Aorta (tissue), 5 donors: ENCODE measurements at regions of chr3 and their contacts with region 1.

Region 1: DNA sequence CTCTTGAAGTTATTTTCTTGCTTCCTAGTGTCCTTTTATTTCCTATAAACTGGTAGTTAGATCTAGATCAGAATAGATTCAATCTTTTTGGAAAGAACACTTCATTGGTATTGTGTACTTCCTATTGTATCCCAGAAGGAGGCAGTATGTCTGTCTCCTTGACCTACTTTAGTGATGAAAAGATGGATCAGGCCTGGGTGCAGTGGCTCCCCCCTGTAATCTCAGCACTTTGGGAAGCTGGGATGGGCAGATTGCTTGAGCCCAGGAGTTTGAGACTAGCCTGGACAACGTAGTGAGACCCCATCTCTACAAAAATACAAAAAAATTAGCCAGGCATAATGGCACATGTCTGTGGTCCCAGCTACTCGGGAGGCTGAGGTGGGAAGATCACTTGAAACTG is 12.0 kb downstream of the BSN start:
- DNase-seq: no peak
- ATAC-seq: no peak
- H3K4me3 ChIP-seq: no peak overlapping the region
- H3K27ac ChIP-seq: no peak overlapping the region
- H3K4me1 ChIP-seq: no peaks in the 10 kb centered on the region
- H3K27me3 ChIP-seq: no peaks in the 10 kb centered on the region

Region 2: DNA sequence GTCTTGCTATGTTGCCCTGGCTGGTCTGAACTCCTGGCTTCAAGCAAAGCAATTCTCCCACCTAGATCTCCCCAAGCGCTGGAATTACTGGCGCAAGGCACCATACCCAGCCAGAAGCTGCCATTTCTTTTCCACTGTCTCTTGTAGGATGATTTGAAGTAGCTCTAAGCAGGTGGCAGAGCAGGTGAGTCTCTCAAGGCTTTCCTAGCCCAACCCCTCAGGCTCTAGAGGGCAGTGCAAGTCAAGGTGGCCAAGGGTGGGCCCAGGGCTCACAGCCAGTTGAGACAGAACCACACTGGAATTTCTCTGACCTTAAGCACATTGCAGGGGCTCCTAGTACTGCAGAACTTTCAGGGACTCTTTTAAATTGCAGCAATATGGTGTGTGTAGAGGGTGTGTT is 111.9 kb before region 1 on chr3:
- intact Hi-C with region 1: no loop called
- DNase-seq: no peak
- ATAC-seq: peak; percentile 54
- H3K4me3 ChIP-seq: no peak overlapping the region
- H3K27ac ChIP-seq: peak overlapping the region in 1 of 2 donors; percentile 12
- H3K4me1 ChIP-seq: no peaks in the 10 kb centered on the region
- H3K27me3 ChIP-seq: no peaks in the 10 kb centered on the region

Region 3: GRCh38 chr3:49668414-49668797 is 102.1 kb after region 1 on chr3:
- intact Hi-C with region 1: loop called in 1 of 2 experiments (anchors 5 kb)
- DNase-seq: no peak
- ATAC-seq: no peak
- H3K4me3 ChIP-seq: no peak overlapping the region
- H3K27ac ChIP-seq: no peak overlapping the region
- H3K4me1 ChIP-seq: no peaks in the 10 kb centered on the region
- H3K27me3 ChIP-seq: no peaks in the 10 kb centered on the region